ENCODE measurements at regions of chr5 and their contacts with region 1.

Region 1: DNA sequence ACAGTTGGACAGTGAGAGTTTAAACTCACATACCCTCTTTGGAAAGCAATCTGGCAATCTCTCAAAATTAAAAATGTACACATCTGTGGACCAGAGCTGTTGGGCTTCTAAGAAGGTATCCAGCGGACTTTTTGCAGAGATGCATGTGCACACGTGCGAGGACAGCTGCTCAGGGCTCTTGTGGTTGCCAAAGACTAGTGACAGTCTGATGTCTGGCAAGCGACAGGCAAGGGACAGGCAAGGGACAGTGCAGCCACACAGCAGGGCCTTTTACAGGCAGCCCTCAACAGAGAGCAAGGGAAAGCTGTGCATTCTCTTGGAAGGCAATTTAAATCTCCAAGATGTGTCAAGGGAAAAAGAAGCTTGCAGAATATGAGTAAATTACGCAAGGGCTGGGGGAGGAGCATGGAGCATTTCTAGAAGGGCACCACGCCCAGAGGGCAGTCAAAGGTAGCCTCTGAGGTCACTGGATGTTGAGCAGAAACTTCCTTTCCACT is 9.3 kb downstream of the GFPT2 start:
- DNase-seq: peak in 1 of 2 experiments; percentile 22
- H3K4me3 ChIP-seq: no peak overlapping the region
- H3K4me3 Mint-ChIP-seq: no peak overlapping the region
- H3K27ac Mint-ChIP-seq: no peak overlapping the region
- H3K4me1 ChIP-seq: 0 out of 2 replicates have a peak, but pooled peaks cover 4% of the 10 kb centered on the region
- H3K4me1 Mint-ChIP-seq: peaks cover 6% of the 10 kb centered on the region
- H3K27me3 ChIP-seq: no peaks in the 10 kb centered on the region
- H3K27me3 Mint-ChIP-seq: no peaks in the 10 kb centered on the region
- CTCF ChIP-seq: no peak

Region 2: GRCh38 chr5:180090098-180090768 is 253.6 kb before region 1 on chr5:
- CTCF ChIA-PET with region 1: no interaction called
- POLR2A ChIA-PET with region 1: no interaction called
- intact Hi-C with region 1: no loop called
- DNase-seq: peak; percentile 75 to 90
- H3K4me3 ChIP-seq: peak overlapping the region; percentile 62
- H3K4me3 Mint-ChIP-seq: peak overlapping the region; percentile 76
- H3K27ac Mint-ChIP-seq: peak overlapping the region; percentile 71
- H3K4me1 ChIP-seq: peaks cover 5% of the 10 kb centered on the region; the same call in 1 of the 2 replicates
- H3K4me1 Mint-ChIP-seq: no peaks in the 10 kb centered on the region
- H3K27me3 ChIP-seq: no peaks in the 10 kb centered on the region
- H3K27me3 Mint-ChIP-seq: no peaks in the 10 kb centered on the region
- CTCF ChIP-seq: peak; percentile 76 to 92

Region 3: GRCh38 chr5:180328296-180329137 is 15.4 kb before region 1 on chr5:
- CTCF ChIA-PET with region 1: interaction called, 10 read pairs
- POLR2A ChIA-PET with region 1: no interaction called
- intact Hi-C with region 1: no loop called
- DNase-seq: peak; percentile 82 to 84
- H3K4me3 ChIP-seq: no peak overlapping the region
- H3K4me3 Mint-ChIP-seq: no peak overlapping the region
- H3K27ac Mint-ChIP-seq: no peak overlapping the region
- H3K4me1 ChIP-seq: no peaks in the 10 kb centered on the region
- H3K4me1 Mint-ChIP-seq: no peaks in the 10 kb centered on the region
- H3K27me3 ChIP-seq: no peaks in the 10 kb centered on the region
- H3K27me3 Mint-ChIP-seq: peaks cover 3% of the 10 kb centered on the region
- CTCF ChIP-seq: peak; percentile 82 to 91

Region 4: DNA sequence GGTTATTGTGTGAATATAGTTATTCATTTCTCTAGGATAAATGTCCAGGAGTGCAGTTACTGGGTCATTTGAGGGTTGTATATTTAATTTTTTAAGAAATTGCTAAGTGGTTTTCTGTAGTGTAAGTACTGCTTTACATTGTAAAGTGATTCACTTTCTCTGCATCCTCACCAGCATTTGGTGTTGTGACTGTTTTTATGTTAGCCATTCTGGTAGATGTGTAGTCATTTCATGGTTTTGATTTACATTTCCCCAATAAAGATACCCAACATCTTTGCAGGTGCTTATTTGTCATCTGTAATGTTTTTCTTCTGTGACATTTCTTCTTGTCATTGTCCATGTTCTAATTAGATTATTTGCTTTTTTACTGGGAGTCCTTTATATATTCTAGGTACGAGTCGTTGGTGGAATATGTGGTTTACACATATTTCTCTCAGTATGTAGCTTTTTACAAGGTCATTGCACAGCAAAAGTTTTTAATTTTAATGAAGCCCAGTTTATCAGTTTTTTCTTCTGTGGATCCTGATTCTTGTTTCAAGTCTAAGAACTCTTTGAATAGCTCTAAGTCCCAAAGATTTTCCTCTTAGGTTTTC is 213.4 kb after region 1 on chr5:
- CTCF ChIA-PET with region 1: no interaction called
- POLR2A ChIA-PET with region 1: no interaction called
- intact Hi-C with region 1: no loop called
- DNase-seq: no peak
- H3K4me3 ChIP-seq: no peak overlapping the region
- H3K4me3 Mint-ChIP-seq: no peak overlapping the region
- H3K27ac Mint-ChIP-seq: no peak overlapping the region
- H3K4me1 ChIP-seq: no peaks in the 10 kb centered on the region
- H3K4me1 Mint-ChIP-seq: no peaks in the 10 kb centered on the region
- H3K27me3 ChIP-seq: no peaks in the 10 kb centered on the region
- H3K27me3 Mint-ChIP-seq: no peaks in the 10 kb centered on the region
- CTCF ChIP-seq: no peak

Region 5: GRCh38 chr5:180591311-180591887 is 247.5 kb after region 1 on chr5 and contains the start of gene SCGB3A1:
- CTCF ChIA-PET with region 1: no interaction called
- POLR2A ChIA-PET with region 1: no interaction called
- intact Hi-C with region 1: no loop called
- DNase-seq: no peak
- H3K4me3 ChIP-seq: no peak within 1 kb of the TSS
- H3K4me3 Mint-ChIP-seq: no peak within 1 kb of the TSS
- H3K27ac Mint-ChIP-seq: no peak within 1 kb of the TSS
- H3K4me1 ChIP-seq: no peaks in the 10 kb centered on the region
- H3K4me1 Mint-ChIP-seq: no peaks in the 10 kb centered on the region
- H3K27me3 ChIP-seq: no peaks in the 10 kb centered on the region; the same call in 1 of the 2 replicates
- H3K27me3 Mint-ChIP-seq: peaks cover 5% of the 10 kb centered on the region
- CTCF ChIP-seq: no peak
- total RNA-seq, gene SCGB3A1: not detected in 2 replicates

Region 6: DNA sequence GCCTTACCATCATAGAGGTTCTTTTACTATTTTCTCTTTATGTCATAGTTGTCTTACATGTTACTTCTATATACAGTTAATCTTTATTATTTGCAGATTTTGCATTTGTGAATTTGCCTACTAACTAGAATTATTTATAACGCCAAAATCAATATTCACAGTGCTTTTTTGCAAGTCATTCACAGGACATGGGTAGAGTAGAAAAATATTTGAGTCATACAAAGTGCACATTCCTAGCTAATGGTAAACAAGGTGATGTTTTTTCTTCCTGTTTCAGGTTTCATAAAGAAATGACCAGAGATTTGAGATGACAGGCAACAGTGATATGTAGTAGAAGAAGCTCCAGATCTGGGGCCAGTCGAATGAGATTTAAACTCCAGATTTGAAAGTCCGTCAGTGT is 425.9 kb after region 1 on chr5:
- CTCF ChIA-PET with region 1: no interaction called
- POLR2A ChIA-PET with region 1: no interaction called
- intact Hi-C with region 1: no loop called
- DNase-seq: no peak
- H3K4me3 ChIP-seq: no peak overlapping the region
- H3K4me3 Mint-ChIP-seq: no peak overlapping the region
- H3K27ac Mint-ChIP-seq: no peak overlapping the region
- H3K4me1 ChIP-seq: no peaks in the 10 kb centered on the region
- H3K4me1 Mint-ChIP-seq: no peaks in the 10 kb centered on the region
- H3K27me3 ChIP-seq: no peaks in the 10 kb centered on the region
- H3K27me3 Mint-ChIP-seq: peaks cover 5% of the 10 kb centered on the region
- CTCF ChIP-seq: no peak

Measured in Caco-2 (cell line).